Dorsolateral prefrontal cortex (tissue), 120 donors: ENCODE measurements at regions of chr15 and their contacts with region 1.

Region 1: DNA sequence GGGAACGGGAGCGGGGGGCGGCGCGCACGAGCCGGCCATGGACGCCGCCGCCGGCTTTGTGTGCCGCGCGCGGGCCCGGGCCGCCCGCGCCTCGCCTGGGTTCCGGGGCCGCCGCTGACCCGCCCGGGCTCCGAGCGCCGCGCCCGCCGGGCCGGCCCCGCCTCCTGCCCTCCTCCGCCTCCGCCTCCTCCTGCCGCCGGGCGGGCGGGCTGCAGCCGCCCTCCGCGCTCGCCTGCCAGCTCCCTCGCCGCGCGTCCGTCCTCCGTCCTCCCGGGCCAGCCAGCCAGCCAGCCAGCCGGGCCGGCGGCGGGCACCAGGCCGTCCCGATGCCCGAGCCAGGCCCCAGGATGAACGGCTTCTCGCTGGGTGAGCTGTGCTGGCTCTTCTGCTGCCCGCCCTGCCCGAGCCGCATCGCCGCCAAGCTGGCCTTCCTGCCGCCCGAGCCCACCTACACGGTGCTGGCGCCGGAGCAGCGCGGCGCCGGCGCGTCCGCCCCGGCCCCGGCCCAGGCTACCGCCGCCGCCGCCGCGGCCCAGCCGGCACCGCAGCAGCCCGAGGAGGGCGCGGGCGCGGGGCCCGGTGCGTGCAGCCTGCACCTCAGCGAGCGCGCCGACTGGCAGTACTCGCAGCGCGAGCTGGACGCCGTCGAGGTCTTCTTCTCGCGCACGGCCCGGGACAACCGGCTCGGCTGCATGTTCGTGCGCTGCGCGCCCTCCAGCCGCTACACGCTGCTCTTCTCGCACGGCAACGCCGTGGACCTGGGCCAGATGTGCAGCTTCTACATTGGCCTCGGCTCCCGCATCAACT is at the start of gene ABHD17C:
- DNase-seq: peak in 9 of 10 donors; percentile 26 to 78 (median 40)
- H3K4me3 ChIP-seq: peak within 1 kb of the TSS; percentile 59 to 91 (median 79)
- H3K27ac ChIP-seq: peak within 1 kb of the TSS in 52 of 59 donors; percentile 22 to 89 (median 74)
- H3K27me3 ChIP-seq: no peaks in the 10 kb centered on the region
- CTCF ChIP-seq: no peak
- total RNA-seq, gene ABHD17C: 14.5 to 33.2 (median 21.2) TPM

Region 2: DNA sequence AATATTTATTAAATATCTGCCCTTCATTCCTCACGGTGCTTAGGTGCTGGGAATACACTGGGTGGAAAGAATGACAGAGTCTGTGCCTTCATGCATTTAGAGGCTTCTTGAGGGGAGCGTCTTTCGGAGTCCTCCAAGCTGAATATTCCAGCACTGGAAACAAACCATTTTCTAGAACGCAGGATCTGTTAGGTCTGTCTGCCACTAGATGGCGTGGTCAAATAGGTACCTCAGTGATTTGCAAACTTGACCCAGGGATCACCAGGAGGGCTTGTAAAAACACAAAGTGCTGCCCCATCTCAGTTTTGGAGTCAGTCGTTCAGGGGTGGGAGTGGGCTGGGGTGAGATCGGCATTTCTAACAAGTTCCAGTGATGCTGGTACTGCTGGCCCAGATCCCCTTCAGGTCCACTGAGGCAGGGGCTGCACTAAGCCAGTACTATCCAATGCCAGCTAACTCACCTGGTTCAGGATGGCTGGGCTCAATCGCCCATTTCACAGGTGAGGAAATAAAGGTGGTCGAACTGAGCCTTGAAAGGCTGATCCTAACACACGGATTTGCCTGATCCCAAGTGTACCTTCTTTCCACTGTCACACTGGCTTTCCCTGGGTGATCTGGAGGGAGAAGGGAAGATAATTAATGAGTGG is 276.3 kb before region 1 on chr15:
- intact Hi-C with region 1: loop called in 1 of 2 experiments (anchors 10 kb)
- DNase-seq: peak in 1 of 10 donors; percentile 52
- H3K4me3 ChIP-seq: no peak overlapping the region
- H3K27ac ChIP-seq: peak overlapping the region in 36 of 59 donors; percentile 1 to 75 (median 39)
- H3K27me3 ChIP-seq: no peaks in the 10 kb centered on the region
- CTCF ChIP-seq: peak; percentile 42 to 76 (median 60)

Region 3: GRCh38 chr15:80674245-80674614 is 21.1 kb before region 1 on chr15:
- intact Hi-C with region 1: no loop called
- DNase-seq: no peak
- H3K4me3 ChIP-seq: no peak overlapping the region
- H3K27ac ChIP-seq: no peak overlapping the region
- H3K27me3 ChIP-seq: peaks cover 0 to 6% (median 0%) of the 10 kb centered on the region in 45 donors
- CTCF ChIP-seq: no peak